ENCODE measurements at regions of chr19 and their contacts with region 1.

Region 1: GRCh38 chr19:39406656-39407393 is at the start of gene ZFP36:
- DNase-seq: peak; percentile 85 to 95 (median 89)
- ATAC-seq: peak; percentile 20
- H3K4me3 ChIP-seq: peak within 1 kb of the TSS; percentile 95 to 100
- H3K4me3 Mint-ChIP-seq: peak within 1 kb of the TSS; percentile 89
- H3K27ac ChIP-seq: peak within 1 kb of the TSS; percentile 94 to 100
- H3K27ac Mint-ChIP-seq: peak within 1 kb of the TSS; percentile 98
- H3K4me1 ChIP-seq: peaks cover 57% of the 10 kb centered on the region
- H3K4me1 Mint-ChIP-seq: peaks cover 52% of the 10 kb centered on the region
- H3K27me3 ChIP-seq: no peaks in the 10 kb centered on the region
- H3K27me3 Mint-ChIP-seq: no peaks in the 10 kb centered on the region
- CTCF ChIP-seq: no peak
- total RNA-seq, gene ZFP36: 1,672 to 1,779 TPM

Region 2: DNA sequence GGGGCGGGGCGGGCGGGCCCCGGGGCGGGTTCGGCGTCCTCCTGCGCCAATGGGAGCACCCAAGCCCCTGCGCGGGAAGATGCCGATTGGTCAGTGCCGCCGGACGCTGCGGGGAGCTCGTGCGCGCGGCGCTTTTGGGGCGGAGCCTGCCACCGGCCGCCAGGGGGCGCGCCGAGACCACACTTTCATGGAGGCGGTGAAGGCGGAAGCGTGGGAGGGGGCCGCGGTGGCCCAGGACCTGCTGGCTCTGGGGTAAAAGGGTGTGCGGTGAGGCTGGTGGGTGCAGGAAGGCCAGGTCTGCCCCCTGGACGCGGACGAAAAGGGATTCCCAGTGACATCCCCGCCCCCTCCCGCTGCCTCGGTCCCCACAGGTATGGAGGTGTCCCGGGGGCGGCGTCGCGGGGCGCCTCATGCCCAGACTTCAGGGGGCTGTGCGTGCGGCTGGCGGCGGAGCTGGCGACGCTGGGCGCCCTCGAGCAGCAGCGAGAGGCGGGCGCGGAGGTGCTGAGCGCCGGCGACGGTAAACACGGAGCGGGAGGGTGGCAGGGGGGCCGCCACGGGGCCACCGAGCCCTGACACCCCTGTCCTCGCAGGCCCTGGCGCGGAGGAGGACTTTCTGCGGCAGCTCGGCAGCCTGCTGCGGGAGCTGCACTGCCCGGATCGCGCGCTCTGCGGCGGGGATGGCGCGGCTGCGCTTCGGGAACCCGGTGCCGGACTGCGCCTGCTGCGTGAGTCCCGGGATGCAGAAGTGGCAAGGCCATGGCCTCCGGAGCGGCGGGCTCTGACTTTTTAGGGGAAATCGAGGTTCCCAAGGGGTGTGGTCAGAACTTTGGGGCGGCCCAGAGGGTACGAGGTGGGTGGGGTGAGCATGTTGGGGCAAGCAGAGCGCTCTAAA is 1003.6 kb before region 1 on chr19 and contains the start of gene FAM98C:
- CTCF ChIA-PET with region 1: no interaction called
- POLR2A ChIA-PET with region 1: no interaction called
- intact Hi-C with region 1: loop called in 1 of 2 experiments (anchors 5 kb)
- DNase-seq: peak; percentile 95 to 99 (median 97)
- ATAC-seq: peak; percentile 96
- H3K4me3 ChIP-seq: peak within 1 kb of the TSS; percentile 76 to 95
- H3K4me3 Mint-ChIP-seq: peak within 1 kb of the TSS; percentile 94
- H3K27ac ChIP-seq: peak within 1 kb of the TSS; percentile 79 to 81
- H3K27ac Mint-ChIP-seq: peak within 1 kb of the TSS; percentile 98
- H3K4me1 ChIP-seq: peaks cover 11% of the 10 kb centered on the region
- H3K4me1 Mint-ChIP-seq: peaks cover 15% of the 10 kb centered on the region
- H3K27me3 ChIP-seq: no peaks in the 10 kb centered on the region
- H3K27me3 Mint-ChIP-seq: no peaks in the 10 kb centered on the region
- CTCF ChIP-seq: peak; percentile 95
- total RNA-seq, gene FAM98C: 28.2 to 29.3 TPM

Region 3: DNA sequence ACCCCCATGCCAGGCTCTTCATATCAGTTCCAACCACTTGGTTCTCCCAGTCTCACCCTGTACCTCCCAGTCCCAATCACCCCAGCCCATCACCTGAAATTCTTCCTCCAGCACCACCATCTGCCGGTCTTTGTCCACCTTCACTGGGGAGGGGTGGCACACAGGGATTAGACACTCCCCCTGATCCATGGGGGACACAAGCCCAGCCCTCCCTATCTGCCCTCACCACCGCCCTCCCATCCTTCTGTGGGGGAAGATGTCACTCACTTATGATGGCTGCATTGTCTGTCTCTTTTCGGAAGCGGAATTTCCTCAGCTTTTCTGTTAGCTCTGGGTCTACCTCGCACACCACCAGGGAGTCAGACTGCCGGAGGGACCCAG is 71.7 kb before region 1 on chr19:
- CTCF ChIA-PET with region 1: no interaction called
- POLR2A ChIA-PET with region 1: interaction called, 10 read pairs
- intact Hi-C with region 1: no loop called
- DNase-seq: peak in 6 of 9 experiments; percentile 10 to 63 (median 38)
- ATAC-seq: peak; percentile 39
- H3K4me3 ChIP-seq: peak overlapping the region; percentile 68 to 96
- H3K4me3 Mint-ChIP-seq: peak overlapping the region; percentile 97
- H3K27ac ChIP-seq: peak overlapping the region; percentile 83 to 96
- H3K27ac Mint-ChIP-seq: peak overlapping the region; percentile 99
- H3K4me1 ChIP-seq: peaks cover 52% of the 10 kb centered on the region
- H3K4me1 Mint-ChIP-seq: peaks cover 60% of the 10 kb centered on the region
- H3K27me3 ChIP-seq: no peaks in the 10 kb centered on the region
- H3K27me3 Mint-ChIP-seq: no peaks in the 10 kb centered on the region
- CTCF ChIP-seq: no peak

Region 4: DNA sequence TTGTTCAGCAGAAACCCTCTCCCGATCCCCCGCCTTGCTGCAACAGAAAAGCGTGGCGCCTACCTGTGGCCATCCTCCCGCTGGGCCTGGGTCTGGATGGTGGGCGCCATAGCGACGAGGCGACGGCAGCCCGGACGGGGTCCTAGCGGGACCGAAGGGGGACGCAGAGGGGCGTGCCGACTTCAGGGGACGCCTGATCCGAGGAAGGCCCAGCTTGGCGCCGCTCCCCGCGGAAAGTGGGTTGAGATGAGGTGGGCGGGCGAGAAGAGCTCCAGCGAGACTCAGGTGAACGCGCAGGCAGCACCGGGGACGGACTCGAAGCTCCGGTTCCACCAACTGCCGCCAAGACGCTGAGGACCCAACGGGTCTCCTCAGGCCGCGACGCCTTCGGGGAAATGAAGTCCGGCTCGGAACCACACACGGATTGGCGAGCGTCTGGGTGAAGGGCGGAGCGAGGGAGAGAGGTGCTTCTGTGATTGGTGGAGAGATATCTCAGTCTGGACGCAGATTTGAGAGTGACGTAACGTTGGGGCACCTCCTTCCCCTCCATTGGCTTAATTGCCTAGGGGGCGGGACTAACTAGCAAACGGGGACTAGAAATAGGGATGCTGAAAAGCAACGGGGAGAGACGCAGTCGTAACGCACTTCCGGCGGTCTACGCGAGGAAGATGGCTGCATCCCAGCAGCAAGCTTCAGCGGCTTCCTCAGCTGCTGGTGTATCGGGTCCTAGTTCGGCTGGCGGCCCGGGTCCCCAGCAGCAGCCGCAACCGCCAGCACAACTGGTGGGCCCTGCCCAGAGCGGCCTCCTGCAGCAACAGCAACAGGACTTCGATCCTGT is 15.9 kb before region 1 on chr19 and contains the starts of genes MED29 and PAF1:
- CTCF ChIA-PET with region 1: interaction called, 156 read pairs
- POLR2A ChIA-PET with region 1: interaction called, 66 read pairs
- intact Hi-C with region 1: loop called (anchors 1 kb)
- DNase-seq: peak; percentile 89 to 100 (median 94)
- ATAC-seq: peak; percentile 87
- H3K4me3 ChIP-seq: peak within 1 kb of the TSS; percentile 86 to 95
- H3K4me3 Mint-ChIP-seq: peak within 1 kb of the TSS; percentile 96
- H3K27ac ChIP-seq: peak within 1 kb of the TSS; percentile 99
- H3K27ac Mint-ChIP-seq: peak within 1 kb of the TSS; percentile 100
- H3K4me1 ChIP-seq: peaks cover 19% of the 10 kb centered on the region
- H3K4me1 Mint-ChIP-seq: peaks cover 37% of the 10 kb centered on the region
- H3K27me3 ChIP-seq: no peaks in the 10 kb centered on the region
- H3K27me3 Mint-ChIP-seq: no peaks in the 10 kb centered on the region
- CTCF ChIP-seq: no peak
- total RNA-seq, gene MED29: 45.9 to 55.1 TPM
- total RNA-seq, gene PAF1: 109 to 117 TPM

Region 5: GRCh38 chr19:39524495-39524894 is 117.7 kb after region 1 on chr19:
- CTCF ChIA-PET with region 1: no interaction called
- POLR2A ChIA-PET with region 1: no interaction called
- intact Hi-C with region 1: no loop called
- DNase-seq: no peak
- ATAC-seq: no peak
- H3K4me3 ChIP-seq: no peak overlapping the region
- H3K4me3 Mint-ChIP-seq: no peak overlapping the region
- H3K27ac ChIP-seq: no peak overlapping the region
- H3K27ac Mint-ChIP-seq: no peak overlapping the region
- H3K4me1 ChIP-seq: no peaks in the 10 kb centered on the region
- H3K4me1 Mint-ChIP-seq: peaks cover 7% of the 10 kb centered on the region
- H3K27me3 ChIP-seq: no peaks in the 10 kb centered on the region
- H3K27me3 Mint-ChIP-seq: no peaks in the 10 kb centered on the region
- CTCF ChIP-seq: no peak

Measured in CD8-positive, alpha-beta T cell (primary cell).